Activated CD8-positive, alpha-beta T cell treated with anti-CD3 and anti-CD28 coated beads, Interleukin-2, amount 10 ng/mL, durations not matched to agents 7 days and 5 days (primary cell): ENCODE measurements at regions of chr22 and their contacts with region 1.

Region 1: GRCh38 chr22:41468381-41469217 is at the starts of genes ACO2 and PHF5A:
- DNase-seq: peak; percentile 99
- ATAC-seq: peak; percentile 92
- H3K4me3 Mint-ChIP-seq: peak within 1 kb of the TSS; percentile 89
- H3K27ac Mint-ChIP-seq: peak within 1 kb of the TSS; percentile 98
- H3K4me1 Mint-ChIP-seq: peaks cover 53% of the 10 kb centered on the region
- H3K27me3 Mint-ChIP-seq: no peaks in the 10 kb centered on the region
- total RNA-seq, gene ACO2: 91.8 to 97.1 TPM
- total RNA-seq, gene PHF5A: 58.8 to 62.1 TPM

Region 2: DNA sequence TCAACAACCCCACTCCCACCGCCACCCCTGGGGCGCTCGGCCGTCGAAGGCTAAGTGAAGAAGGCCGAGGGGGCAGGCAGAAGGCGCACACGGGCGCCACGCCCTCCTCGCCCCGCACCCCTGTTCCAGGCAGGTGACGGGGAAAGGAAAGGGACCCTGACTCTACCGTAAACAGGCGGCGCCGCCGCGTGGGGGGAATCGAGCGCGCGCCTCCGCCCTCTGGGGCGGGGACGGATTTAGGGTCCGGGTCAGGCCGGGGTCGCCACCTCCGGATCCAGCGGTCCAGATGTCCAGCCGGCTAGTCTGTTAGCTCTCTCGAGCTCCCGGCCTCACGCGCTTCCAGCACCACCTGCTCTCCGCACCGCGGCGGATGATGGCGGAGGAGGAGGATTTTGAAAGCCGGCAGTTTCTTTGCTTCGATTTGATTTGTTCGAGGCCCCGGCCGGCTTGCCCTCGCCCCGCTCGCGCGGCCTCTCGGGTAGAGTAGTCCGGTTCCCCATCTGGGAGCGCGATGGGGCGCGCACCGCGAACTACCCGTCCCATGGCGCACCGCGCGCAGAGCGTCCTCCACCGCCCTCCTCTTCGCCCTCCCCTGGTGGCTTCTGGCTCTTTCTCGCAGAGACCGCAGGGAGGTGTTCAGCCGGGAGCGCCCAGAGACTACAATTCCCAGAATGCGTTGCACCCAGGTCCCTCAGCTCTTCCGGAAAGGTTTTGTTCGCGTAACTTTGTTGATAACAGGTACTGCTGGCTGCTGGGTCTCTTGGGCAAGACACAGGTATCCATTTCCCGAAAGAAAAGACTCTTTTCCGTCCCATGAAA is 182.6 kb before region 1 on chr22 and contains the start of gene RANGAP1:
- CTCF ChIA-PET with region 1: no interaction called
- POLR2A ChIA-PET with region 1: interaction called, 15 read pairs
- DNase-seq: peak; percentile 99
- ATAC-seq: peak; percentile 98
- H3K4me3 Mint-ChIP-seq: peak within 1 kb of the TSS; percentile 97
- H3K27ac Mint-ChIP-seq: peak within 1 kb of the TSS; percentile 98
- H3K4me1 Mint-ChIP-seq: peaks cover 42% of the 10 kb centered on the region
- H3K27me3 Mint-ChIP-seq: no peaks in the 10 kb centered on the region
- total RNA-seq, gene RANGAP1: 123 to 125 TPM

Region 3: DNA sequence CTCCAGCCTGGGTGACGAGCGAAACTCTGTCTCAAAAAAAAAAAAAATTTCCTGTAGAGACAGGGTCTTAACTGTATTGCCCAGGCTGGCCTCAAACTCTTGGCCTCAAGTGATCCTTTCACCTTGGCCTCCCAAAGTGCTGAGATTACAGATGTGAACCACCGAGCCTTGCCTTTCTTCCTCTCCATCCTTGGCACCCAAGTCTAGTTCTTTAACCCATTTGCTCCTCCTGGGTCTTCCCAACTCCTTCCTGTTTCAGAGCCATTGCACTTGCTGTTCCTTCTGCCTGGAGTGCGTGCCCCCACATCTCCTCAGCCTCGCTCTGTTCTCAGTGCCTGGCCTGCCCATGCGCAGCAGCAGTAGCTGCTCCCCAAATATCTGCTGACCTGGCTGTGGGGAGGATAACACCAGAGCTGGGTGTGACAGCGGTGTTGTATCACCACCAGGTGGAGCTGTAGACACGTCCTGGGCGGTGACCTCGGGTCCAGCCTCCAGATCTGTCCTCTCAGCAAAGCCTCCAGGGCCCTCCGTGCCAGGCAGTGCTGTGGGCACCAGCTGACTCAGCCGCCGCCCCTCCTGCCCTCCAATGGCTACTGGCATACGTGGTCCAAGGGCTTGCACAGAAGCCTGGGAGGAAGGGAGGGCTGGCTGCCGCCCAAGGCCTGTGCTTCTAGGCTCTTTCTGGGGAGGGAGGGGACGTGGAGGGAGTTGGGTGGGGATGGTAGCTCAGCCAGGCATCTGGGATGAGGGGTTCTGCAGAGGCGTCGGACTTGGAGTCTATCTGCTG is 64.9 kb before region 1 on chr22:
- CTCF ChIA-PET with region 1: interaction called, 19 read pairs
- POLR2A ChIA-PET with region 1: interaction called, 9 read pairs
- DNase-seq: peak; percentile 91
- ATAC-seq: peak; percentile 99
- H3K4me3 Mint-ChIP-seq: no peak overlapping the region
- H3K27ac Mint-ChIP-seq: peak overlapping the region; percentile 35
- H3K4me1 Mint-ChIP-seq: peaks cover 15% of the 10 kb centered on the region
- H3K27me3 Mint-ChIP-seq: no peaks in the 10 kb centered on the region

Region 4: GRCh38 chr22:41458161-41458728 is 10.4 kb before region 1 on chr22:
- CTCF ChIA-PET with region 1: interaction called, 3 read pairs
- POLR2A ChIA-PET with region 1: interaction called, 11 read pairs
- DNase-seq: no peak
- ATAC-seq: no peak
- H3K4me3 Mint-ChIP-seq: no peak overlapping the region
- H3K27ac Mint-ChIP-seq: peak overlapping the region; percentile 50
- H3K4me1 Mint-ChIP-seq: peaks cover 15% of the 10 kb centered on the region
- H3K27me3 Mint-ChIP-seq: no peaks in the 10 kb centered on the region

Region 5: DNA sequence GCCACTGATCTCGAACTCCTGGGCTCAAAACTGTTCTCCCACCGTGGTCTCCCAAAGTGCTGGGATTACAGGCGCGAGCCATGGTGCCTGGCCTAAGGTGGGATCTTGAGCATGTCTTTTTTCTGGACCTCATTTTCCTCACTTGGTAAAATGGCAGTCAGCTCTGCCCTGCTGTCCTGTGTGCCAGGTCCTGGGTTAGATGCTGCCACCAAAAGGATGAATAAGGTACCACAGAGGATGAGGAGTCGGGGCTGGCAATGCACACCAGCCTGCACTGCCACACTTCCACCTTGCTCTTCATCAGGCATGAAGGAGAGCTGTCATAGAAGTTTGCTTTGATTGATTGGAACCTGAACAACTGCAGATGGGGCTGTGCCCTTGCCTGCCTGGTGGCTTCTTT is 32.6 kb after region 1 on chr22:
- CTCF ChIA-PET with region 1: interaction called, 10 read pairs
- POLR2A ChIA-PET with region 1: no interaction called
- DNase-seq: peak; percentile 32
- ATAC-seq: peak; percentile 71
- H3K4me3 Mint-ChIP-seq: no peak overlapping the region
- H3K27ac Mint-ChIP-seq: no peak overlapping the region
- H3K4me1 Mint-ChIP-seq: no peaks in the 10 kb centered on the region
- H3K27me3 Mint-ChIP-seq: no peaks in the 10 kb centered on the region

Region 6: GRCh38 chr22:41589391-41590241 is 121.0 kb after region 1 on chr22 and contains the start of gene PMM1:
- CTCF ChIA-PET with region 1: no interaction called
- POLR2A ChIA-PET with region 1: interaction called, 11 read pairs
- DNase-seq: peak; percentile 100
- ATAC-seq: peak; percentile 98
- H3K4me3 Mint-ChIP-seq: peak within 1 kb of the TSS; percentile 94
- H3K27ac Mint-ChIP-seq: peak within 1 kb of the TSS; percentile 96
- H3K4me1 Mint-ChIP-seq: peaks cover 20% of the 10 kb centered on the region
- H3K27me3 Mint-ChIP-seq: no peaks in the 10 kb centered on the region
- total RNA-seq, gene PMM1: 37.5 to 38.2 TPM